ENCODE measurements at regions of chr12 and their contacts with region 1.

Region 1: DNA sequence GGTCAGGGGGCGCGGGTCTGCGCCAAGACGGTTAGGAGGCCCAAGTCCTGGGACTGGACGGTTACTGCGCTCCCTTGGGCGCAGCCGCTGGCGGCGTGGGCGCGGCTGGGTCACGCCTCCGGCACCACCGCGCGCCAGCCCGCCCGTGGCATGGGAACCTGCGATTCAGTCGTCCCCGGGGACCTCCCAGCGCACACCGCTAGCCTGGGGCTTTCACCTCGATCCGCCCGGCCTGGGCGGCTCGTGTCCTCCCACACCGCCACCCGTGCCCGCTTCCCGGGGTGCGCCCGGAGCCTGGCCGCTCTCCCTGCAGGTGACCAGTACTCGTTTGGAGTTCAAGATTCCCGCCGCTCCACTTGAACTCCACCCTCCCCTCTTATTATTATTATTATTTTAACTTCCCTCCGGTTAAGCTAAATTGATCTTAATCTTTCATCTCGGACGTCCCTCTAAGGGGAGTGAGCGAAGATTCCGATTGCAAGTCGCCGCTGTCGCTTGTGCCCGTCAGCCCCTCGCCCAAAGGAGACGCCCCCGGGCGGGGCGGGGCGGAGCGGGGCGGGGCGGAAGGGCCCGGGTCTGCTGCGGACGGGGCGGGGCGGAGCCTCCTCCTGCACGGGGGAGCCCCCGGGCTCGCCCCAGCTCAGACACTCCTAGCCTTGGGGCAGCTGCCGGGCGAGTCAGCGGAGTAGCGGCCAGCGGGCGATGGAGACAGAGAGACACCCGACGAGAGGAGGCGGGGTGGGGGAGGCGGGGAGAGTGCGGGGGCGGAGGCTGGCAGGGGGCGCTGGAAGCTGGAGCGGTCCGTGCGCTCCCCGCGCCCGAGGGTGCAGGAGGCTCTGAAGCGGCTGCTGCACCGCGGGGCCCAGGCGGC is at the start of gene KCNMB4:
- DNase-seq: peak; percentile 10
- ATAC-seq: peak; percentile 92
- H3K4me3 ChIP-seq: peak within 1 kb of the TSS; percentile 85
- H3K27ac ChIP-seq: no peak within 1 kb of the TSS
- H3K4me1 ChIP-seq: peaks cover 3% of the 10 kb centered on the region; the same call in 1 of the 2 replicates
- H3K27me3 ChIP-seq: peaks cover 15% of the 10 kb centered on the region; the same call in 1 of the 2 replicates
- CTCF ChIP-seq: no peak
- POLR2A ChIP-seq: no peak
- RAD21 ChIP-seq: no peak
- total RNA-seq, gene KCNMB4: 0.90 and 1.4 TPM in 2 replicates

Region 2: DNA sequence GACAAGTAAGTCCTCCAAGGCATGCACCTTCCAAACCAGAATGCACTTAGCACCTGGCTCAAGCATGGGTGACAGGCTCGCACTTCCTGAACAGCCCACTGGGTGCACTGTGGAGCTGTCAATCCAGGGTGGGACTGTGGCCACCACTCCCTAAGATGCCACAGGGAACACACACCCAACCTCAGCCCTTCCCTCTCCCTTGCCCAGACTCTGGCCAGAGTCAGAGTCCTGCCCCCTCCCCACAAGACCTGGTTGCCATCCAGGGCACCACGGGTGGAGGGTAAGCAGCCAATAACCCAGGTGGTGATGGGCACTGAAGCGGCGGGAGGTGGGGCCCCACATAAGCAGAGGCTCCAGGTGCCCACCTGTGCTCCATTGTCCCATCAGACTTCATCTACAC is 380.2 kb before region 1 on chr12:
- CTCF ChIA-PET with region 1: no interaction called
- POLR2A ChIA-PET with region 1: no interaction called
- dilution Hi-C with region 1: no loop called
- in situ Hi-C with region 1: no loop called
- intact Hi-C with region 1: loop called (anchors 5 kb)
- DNase-seq: no peak
- ATAC-seq: no peak
- H3K4me3 ChIP-seq: no peak overlapping the region
- H3K27ac ChIP-seq: no peak overlapping the region
- H3K4me1 ChIP-seq: peaks cover 9% of the 10 kb centered on the region
- H3K27me3 ChIP-seq: no peaks in the 10 kb centered on the region
- CTCF ChIP-seq: no peak
- POLR2A ChIP-seq: no peak
- RAD21 ChIP-seq: no peak

Region 3: GRCh38 chr12:70317781-70318180 is 48.1 kb before region 1 on chr12:
- CTCF ChIA-PET with region 1: no interaction called
- POLR2A ChIA-PET with region 1: no interaction called
- dilution Hi-C with region 1: no loop called
- in situ Hi-C with region 1: no loop called
- intact Hi-C with region 1: no loop called
- DNase-seq: no peak
- ATAC-seq: no peak
- H3K4me3 ChIP-seq: no peak overlapping the region
- H3K27ac ChIP-seq: no peak overlapping the region
- H3K4me1 ChIP-seq: no peaks in the 10 kb centered on the region
- H3K27me3 ChIP-seq: no peaks in the 10 kb centered on the region
- CTCF ChIP-seq: no peak
- POLR2A ChIP-seq: no peak
- RAD21 ChIP-seq: no peak

Measured in IMR-90 (cell line).